ENCODE measurements at regions of chr15 and their contacts with region 1.

Region 1: DNA sequence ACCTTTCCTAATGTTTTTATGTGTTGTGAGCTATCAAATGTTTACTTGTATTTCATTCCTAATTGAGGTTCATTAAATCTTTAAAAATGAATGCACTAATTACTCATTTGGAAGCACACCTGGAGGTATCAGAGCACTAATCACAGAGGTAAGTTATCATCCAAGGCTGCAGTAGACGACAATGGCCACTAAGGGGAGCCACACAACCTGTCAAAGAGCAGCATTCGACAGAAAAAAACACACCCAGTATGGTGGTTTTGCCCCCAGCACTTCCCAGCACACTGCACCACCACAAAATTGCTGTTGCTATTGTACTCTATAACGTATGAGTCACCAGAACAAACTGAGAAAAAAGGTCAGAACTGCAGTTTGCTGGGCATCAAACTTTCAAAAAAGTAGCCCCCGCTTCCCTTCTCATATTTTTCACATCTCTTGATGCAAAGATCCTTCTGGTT is 205.9 kb upstream of the IGF1R start:
- DNase-seq: peak; percentile 83 to 93 (median 93)
- H3K4me3 ChIP-seq: peak overlapping the region in 1 of 7 experiments; percentile 26
- H3K27ac ChIP-seq: no peak overlapping the region
- H3K4me1 ChIP-seq: peaks cover 0 to 7% (median 3%) of the 10 kb centered on the region in 4 experiments
- H3K27me3 ChIP-seq: peaks cover 0 to 4% (median 0%) of the 10 kb centered on the region in 5 experiments

Region 2: DNA sequence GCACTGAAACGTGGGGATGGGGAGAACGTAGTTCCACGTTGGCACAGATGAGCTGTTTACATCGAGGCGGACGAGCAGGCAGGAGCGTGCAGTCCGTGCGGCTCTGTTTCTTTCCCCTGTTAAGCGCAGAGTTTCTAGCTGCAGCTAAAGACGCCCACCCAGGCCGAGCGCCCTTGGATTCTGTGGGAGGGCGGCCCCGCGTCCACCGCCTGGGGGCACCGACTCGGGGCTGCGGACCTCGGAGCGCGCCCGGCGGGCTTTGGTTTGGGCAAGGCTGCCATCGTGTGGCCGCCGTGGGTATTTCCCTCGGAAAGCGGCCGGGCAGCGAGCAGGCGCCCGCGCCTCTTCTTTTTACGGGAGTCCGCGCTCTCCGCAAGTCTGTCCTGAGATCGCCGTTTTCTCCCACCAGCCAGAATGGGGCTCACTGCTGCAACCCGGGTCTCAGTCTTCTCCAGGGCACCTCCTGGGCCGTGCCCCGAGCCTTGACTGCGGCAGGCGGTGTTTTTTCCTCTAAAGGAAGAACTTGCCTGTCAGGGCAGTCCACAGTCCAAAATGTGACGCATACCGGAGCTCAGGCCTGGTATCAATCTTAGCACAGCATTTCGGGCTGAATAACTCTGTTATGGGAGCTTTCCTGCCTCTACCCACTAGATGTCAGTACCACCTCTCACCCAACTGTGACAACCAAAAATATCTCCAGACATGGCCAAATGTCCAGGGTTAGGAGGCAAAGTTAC is 14.0 kb before region 1 on chr15:
- CTCF ChIA-PET with region 1: interaction called, 18 read pairs
- POLR2A ChIA-PET with region 1: no interaction called
- DNase-seq: peak; percentile 69 to 81 (median 77)
- H3K4me3 ChIP-seq: peak overlapping the region in 6 of 7 experiments; percentile 16 to 76 (median 51)
- H3K27ac ChIP-seq: no peak overlapping the region
- H3K4me1 ChIP-seq: peaks cover 0 to 9% (median 7%) of the 10 kb centered on the region in 4 experiments
- H3K27me3 ChIP-seq: peaks cover 0 to 57% (median 16%) of the 10 kb centered on the region in 5 experiments

Region 3: DNA sequence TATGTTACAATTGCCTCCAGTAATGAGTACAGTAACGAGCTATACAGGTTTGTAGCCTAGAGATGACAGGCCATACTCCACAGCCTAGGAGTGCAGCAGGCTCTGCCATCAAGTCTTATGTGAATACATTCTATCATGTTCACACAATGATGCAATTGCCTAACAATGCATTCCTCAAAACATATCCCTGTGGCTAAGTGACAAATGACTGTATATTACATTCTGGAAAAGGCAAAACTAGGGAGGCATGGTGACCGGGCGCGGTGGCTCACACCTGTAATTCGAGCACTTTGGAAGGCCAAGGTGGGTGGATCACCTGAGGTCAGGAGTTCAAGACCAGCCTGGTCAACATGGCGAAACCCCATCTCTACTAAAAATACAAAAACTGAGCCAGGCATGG is 13.6 kb after region 1 on chr15:
- CTCF ChIA-PET with region 1: interaction called, 17 read pairs
- POLR2A ChIA-PET with region 1: no interaction called
- DNase-seq: no peak
- H3K4me3 ChIP-seq: no peak overlapping the region
- H3K27ac ChIP-seq: no peak overlapping the region
- H3K4me1 ChIP-seq: no peaks in the 10 kb centered on the region
- H3K27me3 ChIP-seq: no peaks in the 10 kb centered on the region

Measured in common myeloid progenitor, CD34-positive (primary cell).